ENCODE measurements at regions of chr11 and their contacts with region 1.

Region 1: GRCh38 chr11:95231127-95231880 is at the start of gene SESN3:
- DNase-seq: peak; percentile 99
- ATAC-seq: peak; percentile 83
- H3K4me3 ChIP-seq: peak within 1 kb of the TSS; percentile 73 to 94 (median 88)
- H3K4me3 Mint-ChIP-seq: no peak within 1 kb of the TSS
- H3K27ac ChIP-seq: peak within 1 kb of the TSS; percentile 94 to 96
- H3K27ac Mint-ChIP-seq: peak within 1 kb of the TSS; percentile 95
- H3K4me1 ChIP-seq: peaks cover 29 to 32% of the 10 kb centered on the region in 2 donors
- H3K4me1 Mint-ChIP-seq: peaks cover 31% of the 10 kb centered on the region
- H3K27me3 ChIP-seq: no peaks in the 10 kb centered on the region
- H3K27me3 Mint-ChIP-seq: no peaks in the 10 kb centered on the region
- CTCF ChIP-seq: no peak
- total RNA-seq, gene SESN3: 519 and 537 TPM in 2 replicates

Region 2: GRCh38 chr11:95067039-95067840 is 164.1 kb before region 1 on chr11:
- CTCF ChIA-PET with region 1: interaction called, 3 read pairs
- POLR2A ChIA-PET with region 1: interaction called, 5 read pairs
- intact Hi-C with region 1: loop called (anchors 2 kb)
- DNase-seq: peak; percentile 88
- ATAC-seq: peak; percentile 78
- H3K4me3 ChIP-seq: peak overlapping the region; percentile 70 to 95 (median 93)
- H3K4me3 Mint-ChIP-seq: peak overlapping the region; percentile 100
- H3K27ac ChIP-seq: peak overlapping the region; percentile 78 to 87
- H3K27ac Mint-ChIP-seq: peak overlapping the region; percentile 100
- H3K4me1 ChIP-seq: peaks cover 14 to 22% of the 10 kb centered on the region in 2 donors
- H3K4me1 Mint-ChIP-seq: peaks cover 26% of the 10 kb centered on the region
- H3K27me3 ChIP-seq: no peaks in the 10 kb centered on the region
- H3K27me3 Mint-ChIP-seq: no peaks in the 10 kb centered on the region
- CTCF ChIP-seq: peak; percentile 52

Region 3: GRCh38 chr11:95175818-95176368 is 55.4 kb before region 1 on chr11:
- CTCF ChIA-PET with region 1: no interaction called
- POLR2A ChIA-PET with region 1: no interaction called
- intact Hi-C with region 1: no loop called
- DNase-seq: no peak
- ATAC-seq: no peak
- H3K4me3 ChIP-seq: no peak overlapping the region
- H3K4me3 Mint-ChIP-seq: no peak overlapping the region
- H3K27ac ChIP-seq: no peak overlapping the region
- H3K27ac Mint-ChIP-seq: no peak overlapping the region
- H3K4me1 ChIP-seq: no peaks in the 10 kb centered on the region
- H3K4me1 Mint-ChIP-seq: no peaks in the 10 kb centered on the region
- H3K27me3 ChIP-seq: no peaks in the 10 kb centered on the region
- H3K27me3 Mint-ChIP-seq: no peaks in the 10 kb centered on the region
- CTCF ChIP-seq: no peak

Region 4: DNA sequence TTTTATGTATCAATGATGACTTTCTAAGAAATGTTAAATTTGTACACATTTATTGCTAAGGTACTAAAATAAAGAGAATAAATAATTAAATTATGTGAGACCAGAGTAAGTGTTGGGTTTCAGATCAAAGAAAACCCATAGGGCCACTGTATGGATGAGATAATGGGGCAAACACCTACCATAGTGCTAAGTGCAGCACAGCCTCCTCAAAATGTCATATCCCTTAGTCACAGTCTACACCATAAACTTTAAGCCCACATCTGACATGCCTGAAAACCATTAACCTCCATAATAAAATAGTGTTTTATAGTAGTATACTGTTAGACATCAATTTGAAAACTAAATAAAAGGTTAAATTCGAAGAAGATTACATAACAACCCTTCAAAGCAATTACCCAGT is 37.8 kb before region 1 on chr11:
- CTCF ChIA-PET with region 1: interaction called, 4 read pairs
- POLR2A ChIA-PET with region 1: no interaction called
- intact Hi-C with region 1: loop called (anchors 5 kb)
- DNase-seq: no peak
- ATAC-seq: no peak
- H3K4me3 ChIP-seq: no peak overlapping the region
- H3K4me3 Mint-ChIP-seq: no peak overlapping the region
- H3K27ac ChIP-seq: no peak overlapping the region
- H3K27ac Mint-ChIP-seq: no peak overlapping the region
- H3K4me1 ChIP-seq: peaks cover 10 to 18% of the 10 kb centered on the region in 2 donors
- H3K4me1 Mint-ChIP-seq: peaks cover 42% of the 10 kb centered on the region
- H3K27me3 ChIP-seq: no peaks in the 10 kb centered on the region
- H3K27me3 Mint-ChIP-seq: no peaks in the 10 kb centered on the region
- CTCF ChIP-seq: no peak

Region 5: GRCh38 chr11:95254131-95254704 is 22.9 kb after region 1 on chr11:
- CTCF ChIA-PET with region 1: interaction called, 43 read pairs
- POLR2A ChIA-PET with region 1: interaction called, 63 read pairs
- intact Hi-C with region 1: loop called (anchors 1 kb)
- DNase-seq: peak; percentile 93
- ATAC-seq: peak; percentile 95
- H3K4me3 ChIP-seq: peak overlapping the region; percentile 8 to 59 (median 34)
- H3K4me3 Mint-ChIP-seq: peak overlapping the region; percentile 86
- H3K27ac ChIP-seq: peak overlapping the region; percentile 90 to 93
- H3K27ac Mint-ChIP-seq: peak overlapping the region; percentile 97
- H3K4me1 ChIP-seq: peaks cover 60 to 76% of the 10 kb centered on the region in 2 donors
- H3K4me1 Mint-ChIP-seq: peaks cover 80% of the 10 kb centered on the region
- H3K27me3 ChIP-seq: no peaks in the 10 kb centered on the region
- H3K27me3 Mint-ChIP-seq: no peaks in the 10 kb centered on the region
- CTCF ChIP-seq: no peak

Region 6: DNA sequence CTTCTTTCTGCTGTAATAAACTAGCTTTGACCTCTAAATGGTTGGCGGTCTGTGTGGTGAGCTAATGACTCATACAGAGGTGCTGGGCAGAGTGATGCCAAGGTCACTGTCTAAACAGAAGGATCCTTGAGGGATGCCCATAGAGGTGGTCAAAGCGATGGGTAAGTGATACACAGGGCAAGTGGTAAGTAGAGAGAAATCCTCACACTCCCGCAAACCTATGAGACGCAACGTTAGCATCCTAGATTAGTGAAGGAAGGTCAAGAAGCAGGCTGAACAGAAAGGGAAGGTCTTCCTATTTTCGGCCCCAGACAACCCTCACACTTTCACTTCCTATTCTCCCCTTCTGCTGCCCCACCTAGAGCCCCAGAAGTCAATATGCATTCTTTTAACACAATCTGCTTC is 65.3 kb after region 1 on chr11:
- CTCF ChIA-PET with region 1: interaction called, 26 read pairs
- POLR2A ChIA-PET with region 1: interaction called, 33 read pairs
- intact Hi-C with region 1: loop called (anchors 1 kb)
- DNase-seq: peak; percentile 84
- ATAC-seq: peak; percentile 90
- H3K4me3 ChIP-seq: peak overlapping the region in 4 of 5 experiments; percentile 10 to 53 (median 26)
- H3K4me3 Mint-ChIP-seq: peak overlapping the region; percentile 82
- H3K27ac ChIP-seq: peak overlapping the region; percentile 81 to 82
- H3K27ac Mint-ChIP-seq: peak overlapping the region; percentile 95
- H3K4me1 ChIP-seq: peaks cover 44 to 47% of the 10 kb centered on the region in 2 donors
- H3K4me1 Mint-ChIP-seq: peaks cover 48% of the 10 kb centered on the region
- H3K27me3 ChIP-seq: no peaks in the 10 kb centered on the region
- H3K27me3 Mint-ChIP-seq: no peaks in the 10 kb centered on the region
- CTCF ChIP-seq: peak; percentile 9

Region 7: GRCh38 chr11:95699631-95700470 is 468.5 kb after region 1 on chr11:
- CTCF ChIA-PET with region 1: interaction called, 121 read pairs
- POLR2A ChIA-PET with region 1: interaction called, 31 read pairs
- intact Hi-C with region 1: loop called (anchors 1 kb)
- DNase-seq: no peak
- ATAC-seq: peak; percentile 49
- H3K4me3 ChIP-seq: peak overlapping the region in 4 of 5 experiments; percentile 25 to 56 (median 32)
- H3K4me3 Mint-ChIP-seq: peak overlapping the region; percentile 79
- H3K27ac ChIP-seq: peak overlapping the region; percentile 83 to 89
- H3K27ac Mint-ChIP-seq: peak overlapping the region; percentile 88
- H3K4me1 ChIP-seq: peaks cover 49 to 53% of the 10 kb centered on the region in 2 donors
- H3K4me1 Mint-ChIP-seq: peaks cover 52% of the 10 kb centered on the region
- H3K27me3 ChIP-seq: no peaks in the 10 kb centered on the region
- H3K27me3 Mint-ChIP-seq: no peaks in the 10 kb centered on the region
- CTCF ChIP-seq: no peak

Region 8: DNA sequence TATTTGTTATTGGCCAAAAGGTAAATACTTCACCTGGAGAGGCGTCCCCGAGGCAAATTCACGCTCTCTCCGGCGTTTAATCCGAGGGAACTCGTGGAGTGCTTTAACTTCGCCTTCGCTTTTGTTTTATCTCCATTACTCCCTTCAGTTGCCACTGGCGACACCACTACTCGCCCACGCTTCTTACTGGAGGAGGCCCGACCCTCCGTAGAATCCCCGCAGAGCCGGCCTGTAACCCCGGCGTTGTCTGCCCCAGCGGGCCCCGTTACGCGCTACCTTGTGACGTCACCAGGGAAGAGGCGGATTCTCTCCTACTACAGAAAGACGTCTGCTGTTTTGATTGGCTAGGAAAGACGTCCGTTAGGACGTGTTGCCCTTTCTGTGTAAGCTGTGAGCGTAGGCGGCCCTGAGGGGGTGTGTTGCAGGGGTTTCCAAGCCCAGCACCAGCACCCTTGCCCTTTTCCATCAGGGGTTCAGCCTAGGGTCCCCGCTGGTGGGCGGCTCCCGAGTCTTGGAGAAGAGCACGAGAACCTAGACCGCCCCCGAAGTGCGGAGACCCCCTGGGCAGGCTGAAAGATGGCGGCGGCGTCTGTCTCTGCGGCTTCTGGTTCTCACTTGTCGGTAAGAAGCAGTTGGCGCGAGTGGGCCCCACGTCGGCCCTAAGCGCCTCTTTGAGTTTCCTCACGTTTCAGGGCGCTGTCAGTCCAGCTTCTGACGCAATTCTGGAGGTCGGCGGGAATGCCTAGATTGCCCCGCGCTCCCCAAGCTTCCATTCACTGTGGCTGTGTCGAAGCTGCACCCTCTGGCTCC is 559.0 kb after region 1 on chr11 and contains the start of gene CEP57:
- CTCF ChIA-PET with region 1: no interaction called
- POLR2A ChIA-PET with region 1: interaction called, 10 read pairs
- intact Hi-C with region 1: loop called (anchors 1 kb)
- DNase-seq: peak; percentile 98
- ATAC-seq: peak; percentile 63
- H3K4me3 ChIP-seq: peak within 1 kb of the TSS; percentile 73 to 99 (median 96)
- H3K4me3 Mint-ChIP-seq: peak within 1 kb of the TSS; percentile 97
- H3K27ac ChIP-seq: peak within 1 kb of the TSS; percentile 98 to 100
- H3K27ac Mint-ChIP-seq: peak within 1 kb of the TSS; percentile 99
- H3K4me1 ChIP-seq: peaks cover 20% of the 10 kb centered on the region in 2 donors
- H3K4me1 Mint-ChIP-seq: peaks cover 51% of the 10 kb centered on the region
- H3K27me3 ChIP-seq: no peaks in the 10 kb centered on the region
- H3K27me3 Mint-ChIP-seq: no peaks in the 10 kb centered on the region
- CTCF ChIP-seq: no peak
- total RNA-seq, gene CEP57: 78.1 and 82.9 TPM in 2 replicates